ENCODE measurements at regions of chr15 and their contacts with region 1.

Region 1: GRCh38 chr15:49428409-49429095 is 5.5 kb downstream of the FGF7 start:
- DNase-seq: peak; percentile 54
- ATAC-seq: peak; percentile 91

Region 2: DNA sequence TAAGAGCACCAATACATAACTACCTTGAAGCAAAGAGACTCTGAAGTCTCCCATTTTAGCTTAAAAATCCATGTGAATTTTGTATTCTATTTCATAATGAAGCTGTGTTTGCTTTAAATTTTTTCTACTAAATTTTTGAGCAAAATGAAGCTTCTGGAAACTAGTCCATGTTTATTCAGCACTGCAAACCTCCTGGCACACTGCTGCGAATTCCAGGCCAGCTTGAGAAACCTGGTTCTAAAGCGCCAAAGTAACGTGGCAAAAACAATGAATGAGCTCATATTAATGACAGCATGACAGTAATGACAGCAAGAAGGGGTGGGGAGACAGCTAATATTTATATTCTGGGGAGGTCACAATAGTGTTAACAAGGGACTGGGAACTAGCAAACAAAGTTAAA is 643.4 kb before region 1 on chr15:
- intact Hi-C with region 1: no loop called
- DNase-seq: no peak
- ATAC-seq: peak; percentile 57

Region 3: GRCh38 chr15:49468440-49468839 is 39.9 kb after region 1 on chr15:
- intact Hi-C with region 1: loop called (anchors 5 kb)
- DNase-seq: no peak
- ATAC-seq: peak; percentile 52